ENCODE measurements at regions of chr2 and their contacts with region 1.

Region 1: DNA sequence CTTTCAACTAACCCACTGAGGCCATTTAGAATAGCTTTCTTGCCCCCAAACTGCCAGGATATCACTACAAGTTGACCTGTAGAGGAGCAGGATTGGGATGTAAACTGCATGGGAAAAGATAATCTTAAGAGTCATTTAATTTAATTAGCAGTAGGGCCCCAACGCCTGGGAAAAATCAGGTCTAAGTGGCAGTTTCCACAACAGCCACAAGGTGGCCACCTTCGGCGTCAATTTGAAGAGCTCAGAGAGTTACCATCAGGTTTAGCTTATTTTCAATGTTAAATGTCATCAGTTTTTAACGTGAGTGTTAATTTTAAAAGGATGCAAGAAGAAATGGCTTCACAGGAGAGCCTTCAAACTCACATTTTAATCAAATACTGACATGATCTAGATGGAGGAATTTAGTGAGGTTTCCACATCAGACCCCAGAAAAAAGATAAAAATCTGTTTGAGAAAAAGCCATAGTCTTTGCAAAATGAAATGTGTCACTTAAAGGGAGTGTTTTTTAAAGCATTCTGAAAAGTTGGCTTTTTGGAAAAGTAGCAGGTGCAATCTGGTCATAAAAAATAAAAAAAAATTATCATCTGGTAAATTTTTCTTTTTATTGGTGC is 77.3 kb upstream of the UPP2 start:
- DNase-seq: peak; percentile 55
- H3K4me3 ChIP-seq: no peak overlapping the region; a peak in 1 of 4 replicates
- H3K27ac ChIP-seq: no peak overlapping the region
- H3K4me1 ChIP-seq: peaks cover 0 to 10% of the 10 kb centered on the region in 2 experiments; a peak in 1 of 4 replicates
- H3K27me3 ChIP-seq: no peaks in the 10 kb centered on the region
- CTCF ChIP-seq: peak; percentile 93
- EP300 ChIP-seq: no peak
- RAD21 ChIP-seq: peak; percentile 83

Region 2: DNA sequence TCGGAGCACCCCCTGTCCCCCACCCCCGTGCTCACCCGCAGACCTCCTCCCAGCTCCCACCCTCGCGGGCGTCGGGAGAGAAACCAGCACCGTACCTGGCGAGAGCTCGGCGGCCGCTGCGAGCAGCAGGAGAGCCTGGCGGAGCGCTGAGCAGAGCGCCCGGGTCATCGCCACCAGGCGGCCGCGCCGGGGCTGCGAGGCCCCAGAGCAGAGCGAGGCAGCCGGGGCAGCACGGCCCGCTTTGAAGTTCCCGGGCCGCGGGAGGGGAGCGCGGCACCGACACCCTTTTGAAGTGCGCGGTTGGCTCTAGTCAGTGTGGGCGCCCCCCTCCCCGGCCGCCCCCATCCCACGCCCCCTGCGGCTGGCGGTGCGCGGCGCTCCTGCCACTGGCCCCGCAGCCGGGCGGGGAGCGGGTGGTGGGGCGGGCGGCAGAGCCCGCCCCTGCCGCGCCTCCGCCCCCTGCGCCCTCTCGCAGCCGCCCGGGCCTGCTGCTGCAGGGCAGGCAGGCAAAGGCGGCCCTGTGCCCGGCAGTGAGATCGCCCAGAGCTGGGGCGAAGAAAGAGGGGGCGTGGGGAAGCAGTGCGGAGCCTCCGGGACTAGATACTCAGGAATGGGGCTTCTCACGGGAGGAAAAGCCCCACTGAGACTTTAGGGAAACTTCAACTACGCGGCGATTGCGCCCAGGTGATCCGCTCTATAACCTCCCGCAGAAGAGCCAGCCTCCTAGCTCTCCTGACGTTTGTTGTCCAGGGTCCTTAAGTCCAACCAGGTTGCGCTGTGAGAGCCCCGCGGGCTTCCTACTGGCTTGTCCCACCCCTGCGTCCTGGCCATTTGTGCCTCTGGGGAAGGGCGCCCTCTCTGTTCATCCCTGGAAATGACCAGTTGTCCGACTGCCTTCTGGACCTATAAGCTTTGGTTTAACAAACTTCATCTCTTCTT is 395.6 kb before region 1 on chr2 and contains the start of gene ACVR1C:
- CTCF ChIA-PET with region 1: no interaction called
- POLR2A ChIA-PET with region 1: no interaction called
- DNase-seq: peak; percentile 92
- H3K4me3 ChIP-seq: peak within 1 kb of the TSS; percentile 58 to 63
- H3K27ac ChIP-seq: no peak within 1 kb of the TSS
- H3K4me1 ChIP-seq: peaks cover 0 to 10% of the 10 kb centered on the region in 2 experiments; a peak in 1 of 4 replicates
- H3K27me3 ChIP-seq: peaks cover 16% of the 10 kb centered on the region
- CTCF ChIP-seq: peak; percentile 72
- EP300 ChIP-seq: no peak
- RAD21 ChIP-seq: no peak
- polyA plus RNA-seq, gene ACVR1C: 0.03 TPM in 1 of 2 replicates, not detected in the other

Region 3: GRCh38 chr2:158002079-158002478 is 22.3 kb before region 1 on chr2:
- CTCF ChIA-PET with region 1: interaction called, 13 read pairs
- POLR2A ChIA-PET with region 1: no interaction called
- DNase-seq: peak; percentile 33
- H3K4me3 ChIP-seq: no peak overlapping the region
- H3K27ac ChIP-seq: peak overlapping the region in 1 of 2 experiments; percentile 89; a peak in 2 of 4 replicates
- H3K4me1 ChIP-seq: peaks cover 4 to 16% of the 10 kb centered on the region in 2 experiments; a peak in 3 of 4 replicates
- H3K27me3 ChIP-seq: no peaks in the 10 kb centered on the region
- CTCF ChIP-seq: no peak
- EP300 ChIP-seq: peak in 1 of 2 experiments; percentile 63; a peak in 2 of 4 replicates
- RAD21 ChIP-seq: no peak

Region 4: DNA sequence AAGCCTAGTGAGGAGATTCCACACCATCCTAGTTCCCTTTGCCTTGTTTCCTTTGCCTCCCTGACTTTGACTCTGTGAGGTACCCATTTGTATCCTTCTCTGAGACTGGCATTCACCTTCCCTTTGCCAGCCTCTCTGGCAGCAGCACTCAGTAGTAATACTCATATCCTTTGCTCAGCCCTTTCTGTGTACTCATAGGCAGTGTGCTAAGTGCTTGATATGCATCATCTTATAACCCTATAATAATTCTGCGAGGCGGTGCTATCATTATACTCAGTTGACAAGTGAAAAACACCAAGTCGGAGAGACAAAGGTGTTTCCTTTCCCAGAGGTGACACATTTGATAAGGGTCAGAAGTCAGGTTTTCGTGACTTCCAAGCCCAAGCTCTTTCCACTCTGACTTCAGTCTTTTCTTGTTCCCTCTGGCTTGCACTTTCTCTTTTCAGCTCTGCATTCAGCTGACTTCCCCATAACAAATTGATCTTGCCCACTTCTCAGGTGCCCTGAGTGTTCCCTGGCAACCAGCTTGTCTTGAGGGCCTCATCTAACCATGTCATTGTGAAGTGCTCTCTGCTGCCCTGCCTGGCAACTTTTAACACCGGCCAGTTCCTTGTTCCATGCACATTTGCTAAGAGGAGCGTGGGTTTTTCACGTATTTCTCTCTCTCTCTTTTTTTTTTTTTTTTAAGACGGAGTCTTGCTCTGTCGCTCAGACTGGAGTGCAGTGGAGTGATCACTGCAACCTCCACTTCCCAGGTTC is 17.3 kb before region 1 on chr2:
- CTCF ChIA-PET with region 1: interaction called, 45 read pairs
- POLR2A ChIA-PET with region 1: no interaction called
- DNase-seq: no peak
- H3K4me3 ChIP-seq: no peak overlapping the region
- H3K27ac ChIP-seq: no peak overlapping the region
- H3K4me1 ChIP-seq: peaks cover 4 to 10% of the 10 kb centered on the region in 2 experiments; a peak in 3 of 4 replicates
- H3K27me3 ChIP-seq: no peaks in the 10 kb centered on the region
- CTCF ChIP-seq: no peak
- EP300 ChIP-seq: no peak
- RAD21 ChIP-seq: no peak

Region 5: DNA sequence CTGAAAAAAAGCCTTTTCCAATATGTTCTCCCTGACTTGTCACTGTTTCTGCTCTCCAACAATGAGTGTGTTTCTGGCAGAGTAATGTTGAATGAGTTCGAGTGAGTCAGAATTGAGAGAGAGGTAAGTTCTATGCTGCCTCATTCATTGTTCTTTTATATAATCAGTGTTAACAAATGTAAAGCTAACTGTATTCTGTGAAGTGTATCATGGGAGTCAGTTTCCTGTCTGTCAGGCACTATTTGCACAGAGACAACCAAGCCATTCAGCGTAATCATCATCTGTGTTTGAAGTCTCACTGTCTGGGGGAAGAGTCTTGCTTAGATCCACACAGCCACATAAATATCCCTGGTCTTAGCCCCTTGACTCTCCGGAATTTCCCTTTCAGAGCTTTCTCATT is 55.3 kb after region 1 on chr2:
- CTCF ChIA-PET with region 1: no interaction called
- POLR2A ChIA-PET with region 1: no interaction called
- DNase-seq: no peak
- H3K4me3 ChIP-seq: no peak overlapping the region
- H3K27ac ChIP-seq: no peak overlapping the region
- H3K4me1 ChIP-seq: no peaks in the 10 kb centered on the region
- H3K27me3 ChIP-seq: no peaks in the 10 kb centered on the region; the same call in 1 of the 2 replicates
- CTCF ChIP-seq: no peak
- EP300 ChIP-seq: no peak
- RAD21 ChIP-seq: no peak

Region 6: DNA sequence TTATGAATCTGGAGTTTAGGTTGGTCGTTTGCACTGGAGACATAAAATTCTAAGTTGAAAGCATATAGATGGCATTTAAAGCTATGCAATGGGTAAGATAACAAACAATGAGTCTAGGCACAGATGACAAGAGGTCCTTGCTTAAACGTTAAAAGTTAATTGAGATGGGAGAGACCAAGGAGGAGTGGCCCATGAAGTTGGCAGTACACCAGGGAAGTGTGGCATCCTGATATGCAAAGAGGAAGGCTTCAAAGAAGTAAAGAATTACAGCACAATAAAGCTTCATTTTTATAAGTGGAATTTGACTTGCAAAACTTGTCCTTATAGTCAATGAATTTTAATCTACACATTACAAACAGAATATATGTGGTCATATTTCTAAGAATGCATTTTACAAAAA is 100.5 kb after region 1 on chr2:
- CTCF ChIA-PET with region 1: no interaction called
- POLR2A ChIA-PET with region 1: no interaction called
- DNase-seq: no peak
- H3K4me3 ChIP-seq: no peak overlapping the region
- H3K27ac ChIP-seq: no peak overlapping the region
- H3K4me1 ChIP-seq: no peaks in the 10 kb centered on the region
- H3K27me3 ChIP-seq: no peaks in the 10 kb centered on the region
- CTCF ChIP-seq: no peak
- EP300 ChIP-seq: no peak
- RAD21 ChIP-seq: no peak

Region 7: GRCh38 chr2:158456309-158457066 is 432.1 kb after region 1 on chr2 and contains the starts of genes CCDC148 and PKP4:
- CTCF ChIA-PET with region 1: interaction called, 15 read pairs
- POLR2A ChIA-PET with region 1: no interaction called
- DNase-seq: peak; percentile 95
- H3K4me3 ChIP-seq: peak within 1 kb of the TSS; percentile 76 to 77
- H3K27ac ChIP-seq: peak within 1 kb of the TSS; percentile 72 to 87
- H3K4me1 ChIP-seq: peaks cover 15 to 23% of the 10 kb centered on the region in 2 experiments; a peak in 3 of 4 replicates
- H3K27me3 ChIP-seq: no peaks in the 10 kb centered on the region
- CTCF ChIP-seq: 0 out of 2 replicates have a peak, but pooled peaks have one; percentile 7
- EP300 ChIP-seq: no peak
- RAD21 ChIP-seq: no peak
- polyA plus RNA-seq, gene CCDC148: 0.18 TPM in 1 of 2 replicates, not detected in the other
- polyA plus RNA-seq, gene PKP4: 10.9 and 13.8 TPM in 2 replicates

Region 8: GRCh38 chr2:158903711-158904443 is 879.5 kb after region 1 on chr2:
- CTCF ChIA-PET with region 1: no interaction called
- POLR2A ChIA-PET with region 1: no interaction called
- DNase-seq: no peak
- H3K4me3 ChIP-seq: no peak overlapping the region
- H3K27ac ChIP-seq: no peak overlapping the region
- H3K4me1 ChIP-seq: peaks cover 0 to 4% of the 10 kb centered on the region in 2 experiments; a peak in 1 of 4 replicates
- H3K27me3 ChIP-seq: no peaks in the 10 kb centered on the region
- CTCF ChIP-seq: no peak
- EP300 ChIP-seq: no peak
- RAD21 ChIP-seq: no peak